Sigmoid colon (tissue), 7 donors: ENCODE measurements at regions of chr9 and their contacts with region 1.

Region 1: DNA sequence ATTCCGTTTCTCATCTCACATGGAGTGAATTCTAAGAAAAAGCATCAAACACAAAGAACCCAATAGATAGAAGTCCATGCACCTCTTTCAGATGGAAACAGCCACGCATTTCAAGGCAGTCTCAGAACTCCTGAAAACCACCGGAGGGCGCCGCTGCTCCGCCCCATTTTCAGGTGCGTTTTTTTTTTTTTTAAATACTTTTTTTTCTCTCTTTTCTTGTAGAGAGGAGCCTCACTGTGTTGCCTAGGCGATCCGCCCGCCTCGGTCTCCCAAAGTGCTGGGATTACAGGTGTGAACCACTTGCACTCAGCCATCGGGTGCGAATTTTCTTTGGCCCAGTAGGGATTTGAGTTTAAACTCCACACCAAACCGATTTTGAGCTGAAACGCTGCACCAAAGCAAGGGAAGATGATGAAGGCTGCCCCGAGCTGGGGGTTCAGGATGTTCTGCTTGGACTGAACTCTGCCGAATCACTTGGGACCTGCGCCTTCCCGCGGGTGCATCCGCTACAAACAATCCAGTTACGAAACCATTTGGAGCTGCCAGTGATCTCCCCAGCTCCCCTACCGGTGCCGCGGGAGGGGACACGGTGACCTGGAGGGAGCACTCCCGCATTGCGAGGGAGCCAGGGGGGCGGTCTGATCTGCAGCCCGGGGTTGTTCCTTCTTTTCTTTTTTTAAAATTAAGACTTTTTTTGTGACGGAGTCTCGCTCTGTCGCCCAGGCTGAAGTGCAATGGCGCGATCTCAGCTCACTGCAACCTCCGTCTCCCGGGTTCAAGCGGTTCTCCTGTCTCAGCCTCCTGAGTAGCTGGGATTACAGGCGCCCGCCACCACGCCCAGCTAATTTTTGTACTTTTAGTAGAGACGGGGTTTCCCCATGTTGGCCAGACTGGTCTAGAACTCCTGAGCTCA is 1.4 kb downstream of the PTGR1 start:
- DNase-seq: peak; percentile 89
- H3K4me3 ChIP-seq: peak overlapping the region; percentile 62 to 80 (median 65)
- H3K27ac ChIP-seq: peak overlapping the region; percentile 84 to 89 (median 87)
- H3K4me1 ChIP-seq: peaks cover 0 to 24% (median 5%) of the 10 kb centered on the region in 4 donors
- H3K27me3 ChIP-seq: no peaks in the 10 kb centered on the region
- CTCF ChIP-seq: peak; percentile 3 to 58 (median 29)
- EP300 ChIP-seq: no peak
- POLR2A ChIP-seq: no peak

Region 2: GRCh38 chr9:111631071-111631971 is 33.2 kb after region 1 on chr9 and contains the start of gene DNAJC25:
- intact Hi-C with region 1: loop called (anchors 1 kb)
- DNase-seq: peak; percentile 98
- H3K4me3 ChIP-seq: peak within 1 kb of the TSS; percentile 82 to 97 (median 88)
- H3K27ac ChIP-seq: peak within 1 kb of the TSS; percentile 91 to 94 (median 92)
- H3K4me1 ChIP-seq: peaks cover 0 to 35% (median 25%) of the 10 kb centered on the region in 4 donors
- H3K27me3 ChIP-seq: no peaks in the 10 kb centered on the region
- CTCF ChIP-seq: no peak
- EP300 ChIP-seq: no peak
- POLR2A ChIP-seq: peak; percentile 86 to 87
- total RNA-seq, gene DNAJC25: 7.4 to 11.5 (median 9.1) TPM

Region 3: GRCh38 chr9:111691672-111692329 is 93.7 kb after region 1 on chr9:
- intact Hi-C with region 1: loop called (anchors 5 kb)
- DNase-seq: no peak
- H3K4me3 ChIP-seq: no peak overlapping the region
- H3K27ac ChIP-seq: no peak overlapping the region
- H3K4me1 ChIP-seq: no peaks in the 10 kb centered on the region
- H3K27me3 ChIP-seq: no peaks in the 10 kb centered on the region
- CTCF ChIP-seq: no peak
- EP300 ChIP-seq: no peak
- POLR2A ChIP-seq: no peak

Region 4: GRCh38 chr9:112020680-112021596 is 422.9 kb after region 1 on chr9:
- intact Hi-C with region 1: no loop called
- DNase-seq: no peak
- H3K4me3 ChIP-seq: no peak overlapping the region
- H3K27ac ChIP-seq: peak overlapping the region in 2 of 4 donors; percentile 26 to 38
- H3K4me1 ChIP-seq: peaks cover 0 to 24% (median 9%) of the 10 kb centered on the region in 4 donors
- H3K27me3 ChIP-seq: no peaks in the 10 kb centered on the region
- CTCF ChIP-seq: no peak
- EP300 ChIP-seq: no peak
- POLR2A ChIP-seq: no peak